Right cardiac atrium (tissue), 5 donors: ENCODE measurements at regions of chr2 and their contacts with region 1.

Region 1: GRCh38 chr2:9205963-9206948 is at the start of gene ASAP2:
- DNase-seq: peak; percentile 79 to 91 (median 90)
- ATAC-seq: peak; percentile 82 to 88
- H3K4me3 ChIP-seq: peak within 1 kb of the TSS; percentile 92
- H3K27ac ChIP-seq: peak within 1 kb of the TSS; percentile 81
- H3K4me1 ChIP-seq: no peaks in the 10 kb centered on the region
- H3K27me3 ChIP-seq: no peaks in the 10 kb centered on the region
- total RNA-seq, gene ASAP2: 13.3 to 19.7 (median 16.0) TPM

Region 2: DNA sequence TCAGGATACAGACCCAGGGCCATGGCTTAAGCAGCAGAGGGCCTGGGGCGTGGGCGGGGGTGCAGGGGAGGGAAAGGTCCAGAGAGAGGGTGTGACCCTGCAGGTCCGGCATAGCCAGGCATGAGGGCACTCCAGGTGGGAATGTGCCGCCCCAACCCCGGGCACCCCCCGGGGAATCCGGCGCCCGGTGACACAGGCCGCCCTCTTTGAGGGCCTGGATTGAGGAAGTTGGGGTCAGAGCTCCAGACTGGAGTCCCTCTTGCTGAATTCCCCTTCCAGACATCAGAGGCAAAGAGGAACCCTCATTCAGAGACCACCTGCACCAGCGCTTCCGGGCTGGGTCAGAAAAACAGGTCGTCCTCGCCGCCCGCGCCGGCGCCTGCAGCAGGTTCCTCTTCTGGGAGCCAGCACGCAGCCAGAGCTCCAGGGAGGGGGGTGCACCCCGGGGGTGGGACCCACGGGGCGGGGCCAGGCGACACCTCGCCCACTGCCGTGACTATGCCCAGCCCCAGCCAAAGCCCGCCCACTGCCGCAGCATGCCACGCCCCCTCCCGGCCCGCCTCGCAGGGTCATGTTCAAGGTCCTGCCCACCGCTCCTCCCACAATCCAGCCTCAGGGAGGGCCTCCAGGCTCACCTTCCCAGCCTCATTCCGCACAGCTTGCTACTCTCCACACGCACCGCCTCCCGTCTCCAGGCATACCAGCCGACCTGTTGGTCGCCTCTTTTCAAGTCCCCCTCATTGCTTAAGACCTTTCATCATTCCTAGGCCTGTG is 622.7 kb before region 1 on chr2:
- intact Hi-C with region 1: no loop called
- DNase-seq: peak; percentile 92 to 98 (median 97)
- ATAC-seq: peak; percentile 94 to 95
- H3K4me3 ChIP-seq: no peak overlapping the region
- H3K27ac ChIP-seq: peak overlapping the region; percentile 48
- H3K4me1 ChIP-seq: peaks cover 12% of the 10 kb centered on the region
- H3K27me3 ChIP-seq: no peaks in the 10 kb centered on the region

Region 3: DNA sequence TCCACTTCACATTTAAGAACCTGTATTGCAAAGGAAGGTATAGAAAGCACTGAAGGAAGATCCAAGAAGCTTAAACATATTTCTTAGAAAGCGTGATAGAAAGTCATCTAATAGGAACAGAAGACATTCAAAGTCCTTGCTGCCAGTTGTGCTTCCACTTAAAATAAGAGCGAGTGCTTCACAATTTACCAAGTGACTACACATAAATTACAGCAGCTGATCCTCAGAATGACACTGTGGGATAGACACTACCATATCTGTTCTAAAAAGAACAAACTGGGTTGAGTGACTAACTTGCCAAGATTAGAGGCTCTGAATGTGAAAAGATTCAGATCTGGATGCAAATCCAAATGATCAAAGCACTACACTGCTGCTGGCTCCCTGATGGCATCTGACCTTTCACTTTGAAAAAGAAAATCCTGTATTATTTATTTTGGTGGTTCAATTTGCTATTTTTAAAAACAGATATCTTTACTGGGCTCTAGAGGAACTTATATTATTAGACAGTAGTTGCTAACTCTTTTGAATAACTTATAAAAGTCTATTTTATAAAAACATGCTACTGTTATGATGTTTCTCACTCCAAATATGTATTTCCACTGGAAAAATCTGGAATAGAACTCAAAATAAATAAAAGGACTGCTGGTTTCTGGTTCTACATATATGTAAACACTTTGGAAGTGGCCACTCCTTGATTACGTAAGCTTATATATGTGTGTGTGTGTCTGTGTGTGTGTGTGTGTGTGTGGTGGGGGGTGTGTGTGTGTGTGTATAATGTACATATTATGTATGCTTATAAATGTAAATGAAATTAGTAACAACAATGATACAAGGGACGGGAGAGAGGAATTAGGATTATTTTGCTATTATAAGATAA is 426.2 kb before region 1 on chr2:
- intact Hi-C with region 1: no loop called
- DNase-seq: no peak
- ATAC-seq: no peak
- H3K4me3 ChIP-seq: no peak overlapping the region
- H3K27ac ChIP-seq: no peak overlapping the region
- H3K4me1 ChIP-seq: peaks cover 1% of the 10 kb centered on the region
- H3K27me3 ChIP-seq: no peaks in the 10 kb centered on the region

Region 4: DNA sequence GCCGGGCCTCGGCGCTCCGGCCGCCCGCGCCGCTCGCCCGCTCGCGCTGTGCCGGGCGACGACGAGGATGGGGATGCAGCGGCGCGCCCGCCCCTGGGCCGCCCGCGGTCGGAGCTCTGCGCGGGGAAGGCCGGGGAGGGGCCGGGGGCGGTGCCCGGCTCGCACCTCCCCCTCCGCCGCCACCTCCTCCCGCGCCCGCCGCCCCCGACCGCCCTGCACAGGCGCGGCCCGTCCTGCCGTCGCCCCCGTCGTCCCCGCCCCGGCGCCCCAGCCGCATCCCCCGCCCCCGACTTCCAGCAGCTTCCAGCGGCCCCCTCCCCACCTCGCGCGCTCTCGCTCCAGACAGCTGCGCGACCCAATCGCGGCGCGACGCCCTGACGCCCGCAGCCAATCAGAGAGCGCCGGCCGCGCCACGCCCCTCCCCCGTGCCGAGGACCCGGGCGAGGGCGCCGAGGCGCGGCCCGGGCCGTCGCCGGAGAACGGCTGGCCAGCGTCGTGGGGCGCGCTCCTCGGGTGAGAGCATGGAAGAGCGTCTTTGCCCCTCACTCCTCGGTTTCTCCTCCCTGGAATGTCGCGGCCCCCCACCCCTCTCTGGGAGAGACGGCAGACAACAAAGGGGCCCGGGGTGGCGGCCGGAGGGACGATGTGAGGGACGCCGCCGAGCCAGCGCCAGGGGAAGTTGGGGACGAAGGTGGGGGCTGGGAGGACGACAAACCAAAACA is 202.5 kb before region 1 on chr2 and contains the start of gene MBOAT2:
- intact Hi-C with region 1: no loop called
- DNase-seq: peak; percentile 88 to 96 (median 96)
- ATAC-seq: peak; percentile 98
- H3K4me3 ChIP-seq: peak within 1 kb of the TSS; percentile 97
- H3K27ac ChIP-seq: peak within 1 kb of the TSS; percentile 86
- H3K4me1 ChIP-seq: no peaks in the 10 kb centered on the region
- H3K27me3 ChIP-seq: no peaks in the 10 kb centered on the region
- total RNA-seq, gene MBOAT2: 8.4 to 11.0 (median 8.9) TPM

Region 5: GRCh38 chr2:9142551-9143263 is 63.5 kb before region 1 on chr2:
- intact Hi-C with region 1: loop called in 2 of 4 experiments (anchors 2 to 10 kb)
- DNase-seq: peak; percentile 88 to 95 (median 95)
- ATAC-seq: peak; percentile 89 to 90
- H3K4me3 ChIP-seq: no peak overlapping the region
- H3K27ac ChIP-seq: no peak overlapping the region
- H3K4me1 ChIP-seq: no peaks in the 10 kb centered on the region
- H3K27me3 ChIP-seq: no peaks in the 10 kb centered on the region

Region 6: GRCh38 chr2:9152975-9153642 is 53.1 kb before region 1 on chr2:
- intact Hi-C with region 1: loop called in 2 of 4 experiments (anchors 10 kb)
- DNase-seq: peak in 1 of 3 donors; percentile 67
- ATAC-seq: peak; percentile 67 to 71
- H3K4me3 ChIP-seq: no peak overlapping the region
- H3K27ac ChIP-seq: no peak overlapping the region
- H3K4me1 ChIP-seq: no peaks in the 10 kb centered on the region
- H3K27me3 ChIP-seq: no peaks in the 10 kb centered on the region

Region 7: GRCh38 chr2:9274701-9275343 is 68.6 kb after region 1 on chr2:
- intact Hi-C with region 1: loop called in 1 of 4 experiments (anchors 10 kb)
- DNase-seq: no peak
- ATAC-seq: no peak
- H3K4me3 ChIP-seq: no peak overlapping the region
- H3K27ac ChIP-seq: no peak overlapping the region
- H3K4me1 ChIP-seq: peaks cover 6% of the 10 kb centered on the region
- H3K27me3 ChIP-seq: no peaks in the 10 kb centered on the region

Region 8: DNA sequence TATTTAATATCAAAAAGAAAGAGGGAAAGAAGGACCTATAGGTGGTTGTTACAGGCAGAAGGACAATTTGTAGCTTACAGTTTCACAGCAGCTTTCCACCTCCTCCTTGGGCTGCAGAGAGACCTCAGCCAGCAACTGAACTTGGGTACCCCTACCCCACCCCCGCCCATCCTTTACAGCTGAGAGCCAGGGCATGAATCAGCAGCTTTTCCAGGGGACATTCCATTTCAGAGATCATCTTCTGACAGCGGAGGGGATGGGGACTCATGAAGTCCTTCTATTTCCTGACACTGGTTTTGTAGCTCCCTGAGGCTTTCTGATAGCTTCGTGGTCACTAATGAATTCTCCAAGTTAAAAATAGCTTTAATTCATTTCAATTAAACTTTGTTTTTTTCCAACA is 120.7 kb after region 1 on chr2:
- intact Hi-C with region 1: loop called in 2 of 4 experiments (anchors 2 to 10 kb)
- DNase-seq: no peak
- ATAC-seq: no peak
- H3K4me3 ChIP-seq: no peak overlapping the region
- H3K27ac ChIP-seq: no peak overlapping the region
- H3K4me1 ChIP-seq: peaks cover 6% of the 10 kb centered on the region
- H3K27me3 ChIP-seq: no peaks in the 10 kb centered on the region

Region 9: GRCh38 chr2:9333591-9334171 is 127.4 kb after region 1 on chr2:
- intact Hi-C with region 1: loop called in 2 of 4 experiments (anchors 2 to 10 kb)
- DNase-seq: peak in 2 of 3 donors; percentile 56 to 65
- ATAC-seq: peak; percentile 78
- H3K4me3 ChIP-seq: no peak overlapping the region
- H3K27ac ChIP-seq: no peak overlapping the region
- H3K4me1 ChIP-seq: peaks cover 8% of the 10 kb centered on the region
- H3K27me3 ChIP-seq: no peaks in the 10 kb centered on the region

Region 10: GRCh38 chr2:9347411-9347881 is 141.2 kb after region 1 on chr2:
- intact Hi-C with region 1: loop called in 1 of 4 experiments (anchors 10 kb)
- DNase-seq: peak; percentile 81 to 83 (median 82)
- ATAC-seq: peak; percentile 94 to 95
- H3K4me3 ChIP-seq: no peak overlapping the region
- H3K27ac ChIP-seq: peak overlapping the region; percentile 85
- H3K4me1 ChIP-seq: peaks cover 9% of the 10 kb centered on the region
- H3K27me3 ChIP-seq: no peaks in the 10 kb centered on the region